ENCODE measurements at regions of chr3 and their contacts with region 1.

Region 1: GRCh38 chr3:172341482-172342059 is 106.7 kb downstream of the GHSR start:
- DNase-seq: no peak
- ATAC-seq: peak; percentile 58
- H3K4me3 Mint-ChIP-seq: no peak overlapping the region
- H3K27ac Mint-ChIP-seq: no peak overlapping the region
- H3K4me1 Mint-ChIP-seq: no peaks in the 10 kb centered on the region
- H3K27me3 Mint-ChIP-seq: no peaks in the 10 kb centered on the region
- CTCF ChIP-seq: peak; percentile 53

Region 2: GRCh38 chr3:170961616-170962400 is 1379.8 kb before region 1 on chr3:
- CTCF ChIA-PET with region 1: interaction called, 6 read pairs
- POLR2A ChIA-PET with region 1: no interaction called
- intact Hi-C with region 1: loop called (anchors 1 kb)
- DNase-seq: no peak
- ATAC-seq: no peak
- H3K4me3 Mint-ChIP-seq: no peak overlapping the region
- H3K27ac Mint-ChIP-seq: no peak overlapping the region
- H3K4me1 Mint-ChIP-seq: no peaks in the 10 kb centered on the region
- H3K27me3 Mint-ChIP-seq: peaks cover 4% of the 10 kb centered on the region
- CTCF ChIP-seq: no peak

Region 3: GRCh38 chr3:171049861-171050444 is 1291.6 kb before region 1 on chr3:
- CTCF ChIA-PET with region 1: interaction called, 3 read pairs
- POLR2A ChIA-PET with region 1: no interaction called
- intact Hi-C with region 1: loop called (anchors 2 kb)
- DNase-seq: no peak
- ATAC-seq: peak; percentile 42
- H3K4me3 Mint-ChIP-seq: no peak overlapping the region
- H3K27ac Mint-ChIP-seq: no peak overlapping the region
- H3K4me1 Mint-ChIP-seq: no peaks in the 10 kb centered on the region
- H3K27me3 Mint-ChIP-seq: no peaks in the 10 kb centered on the region
- CTCF ChIP-seq: no peak

Region 4: DNA sequence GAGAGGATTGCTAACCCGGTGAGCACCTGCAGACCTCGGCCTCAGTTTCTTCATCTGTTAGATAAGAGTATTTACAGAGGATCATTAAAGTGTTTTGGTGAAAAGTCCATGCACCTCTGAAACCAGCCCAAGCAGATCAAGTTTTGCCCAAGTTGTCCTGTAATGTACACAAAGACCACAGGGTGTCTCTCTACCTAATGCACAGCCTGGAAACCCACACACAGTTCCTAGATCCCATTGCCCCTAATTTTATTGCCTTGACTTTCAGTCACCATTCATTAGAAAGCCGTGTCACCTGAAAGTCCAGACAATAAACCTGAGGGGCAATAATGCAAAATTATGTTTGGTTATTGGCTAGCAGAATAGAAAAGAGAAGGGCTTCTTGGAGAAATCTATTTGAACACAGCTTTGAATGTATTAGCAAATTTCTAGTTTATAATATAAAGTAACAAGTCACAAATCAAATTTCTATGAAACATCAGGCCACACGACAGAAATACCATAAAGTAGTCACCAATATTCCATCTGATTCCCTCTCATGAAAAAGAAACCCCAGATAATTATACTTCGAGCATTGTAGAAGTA is 1153.8 kb before region 1 on chr3:
- CTCF ChIA-PET with region 1: no interaction called
- POLR2A ChIA-PET with region 1: no interaction called
- intact Hi-C with region 1: loop called (anchors 1 kb)
- DNase-seq: no peak
- ATAC-seq: no peak
- H3K4me3 Mint-ChIP-seq: no peak overlapping the region
- H3K27ac Mint-ChIP-seq: no peak overlapping the region
- H3K4me1 Mint-ChIP-seq: no peaks in the 10 kb centered on the region
- H3K27me3 Mint-ChIP-seq: no peaks in the 10 kb centered on the region
- CTCF ChIP-seq: no peak

Region 5: GRCh38 chr3:171566803-171567422 is 774.7 kb before region 1 on chr3:
- CTCF ChIA-PET with region 1: interaction called, 4 read pairs
- POLR2A ChIA-PET with region 1: no interaction called
- intact Hi-C with region 1: loop called (anchors 1 kb)
- DNase-seq: no peak
- ATAC-seq: peak; percentile 31
- H3K4me3 Mint-ChIP-seq: no peak overlapping the region
- H3K27ac Mint-ChIP-seq: no peak overlapping the region
- H3K4me1 Mint-ChIP-seq: no peaks in the 10 kb centered on the region
- H3K27me3 Mint-ChIP-seq: peaks cover 3% of the 10 kb centered on the region
- CTCF ChIP-seq: peak; percentile 77

Region 6: GRCh38 chr3:171614318-171614921 is 727.2 kb before region 1 on chr3:
- CTCF ChIA-PET with region 1: interaction called, 6 read pairs
- POLR2A ChIA-PET with region 1: no interaction called
- intact Hi-C with region 1: loop called (anchors 1 kb)
- DNase-seq: no peak
- ATAC-seq: no peak
- H3K4me3 Mint-ChIP-seq: no peak overlapping the region
- H3K27ac Mint-ChIP-seq: no peak overlapping the region
- H3K4me1 Mint-ChIP-seq: no peaks in the 10 kb centered on the region
- H3K27me3 Mint-ChIP-seq: peaks cover 11% of the 10 kb centered on the region
- CTCF ChIP-seq: no peak

Region 7: GRCh38 chr3:172355839-172356238 is 14.3 kb after region 1 on chr3:
- CTCF ChIA-PET with region 1: interaction called, 12 read pairs
- POLR2A ChIA-PET with region 1: no interaction called
- intact Hi-C with region 1: no loop called
- DNase-seq: no peak
- ATAC-seq: no peak
- H3K4me3 Mint-ChIP-seq: no peak overlapping the region
- H3K27ac Mint-ChIP-seq: no peak overlapping the region
- H3K4me1 Mint-ChIP-seq: no peaks in the 10 kb centered on the region
- H3K27me3 Mint-ChIP-seq: no peaks in the 10 kb centered on the region
- CTCF ChIP-seq: no peak

Measured in activated B cell treated with CpG ODN at 0.5 μM for 24 hours (primary cell).